ENCODE measurements at regions of chr17 and their contacts with region 1.

Region 1: DNA sequence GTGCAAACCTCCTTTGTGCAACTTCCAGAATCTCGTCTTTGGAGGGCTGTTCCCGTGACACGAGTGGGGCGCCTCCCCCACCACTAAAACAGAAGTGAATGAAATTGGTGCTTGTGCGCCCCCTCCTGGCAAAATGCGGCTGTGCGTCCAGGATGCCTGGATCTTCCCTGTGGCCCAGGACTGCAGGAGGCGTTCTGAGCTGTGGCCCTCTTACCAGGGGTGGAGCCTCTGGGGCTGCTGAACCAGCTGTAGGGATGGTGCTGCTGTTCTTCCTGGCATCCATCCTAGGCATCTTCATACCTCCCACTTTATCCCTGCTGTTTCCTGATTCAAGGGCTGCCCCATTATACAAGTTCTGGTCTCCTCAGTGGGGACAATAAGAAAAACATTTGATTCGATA is 18.5 kb upstream of the NAGLU start:
- DNase-seq: peak; percentile 60 to 78
- H3K4me3 ChIP-seq: no peak overlapping the region
- H3K27ac ChIP-seq: peak overlapping the region; percentile 89
- H3K4me1 ChIP-seq: peaks cover 53% of the 10 kb centered on the region
- H3K27me3 ChIP-seq: no peaks in the 10 kb centered on the region
- CTCF ChIP-seq: peak; percentile 95

Region 2: DNA sequence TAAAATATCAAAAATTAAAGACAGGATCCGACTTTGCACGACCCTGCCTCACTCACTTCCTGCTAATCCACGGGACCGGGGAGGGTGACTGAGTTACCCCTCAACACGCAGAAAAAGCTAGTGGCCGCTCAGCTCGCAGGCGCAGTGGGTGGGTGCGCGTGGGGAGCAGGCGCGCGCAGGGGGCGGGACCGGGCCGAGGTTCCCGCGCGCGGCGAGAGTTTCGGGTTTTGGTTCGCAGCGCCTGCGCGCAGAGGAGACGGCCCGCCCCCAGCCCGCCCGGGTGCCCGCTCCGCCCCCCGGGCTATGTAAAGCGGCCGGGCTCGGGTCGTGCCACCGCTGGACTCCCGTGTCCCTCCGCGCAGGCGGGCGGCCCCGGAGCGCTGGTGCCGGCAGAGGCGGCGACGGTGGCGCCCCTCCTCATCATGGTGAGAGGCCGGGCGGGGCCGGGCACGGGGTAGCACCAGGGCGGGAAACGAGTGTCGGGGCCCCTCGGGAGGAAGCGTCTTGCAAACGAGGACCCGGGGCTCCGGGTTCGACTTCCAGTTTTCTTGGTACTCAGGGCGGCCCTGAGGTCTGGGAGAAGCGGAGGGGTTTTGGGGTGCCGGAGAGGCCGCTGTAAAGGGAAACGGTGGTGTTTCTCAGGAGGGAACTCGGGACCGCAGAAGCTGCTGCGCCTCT is 550.9 kb before region 1 on chr17 and contains the start of gene CNP:
- CTCF ChIA-PET with region 1: no interaction called
- POLR2A ChIA-PET with region 1: no interaction called
- intact Hi-C with region 1: loop called (anchors 5 kb)
- DNase-seq: peak; percentile 69 to 90
- H3K4me3 ChIP-seq: peak within 1 kb of the TSS; percentile 78
- H3K27ac ChIP-seq: peak within 1 kb of the TSS; percentile 93
- H3K4me1 ChIP-seq: peaks cover 11% of the 10 kb centered on the region
- H3K27me3 ChIP-seq: no peaks in the 10 kb centered on the region
- CTCF ChIP-seq: no peak
- total RNA-seq, gene CNP: 60.6 and 64.7 TPM in 2 replicates

Region 3: GRCh38 chr17:42405963-42406495 is 111.5 kb before region 1 on chr17:
- CTCF ChIA-PET with region 1: interaction called, 7 read pairs
- POLR2A ChIA-PET with region 1: interaction called, 8 read pairs
- intact Hi-C with region 1: loop called (anchors 5 kb)
- DNase-seq: peak in 1 of 2 experiments; percentile 45
- H3K4me3 ChIP-seq: no peak overlapping the region
- H3K27ac ChIP-seq: no peak overlapping the region
- H3K4me1 ChIP-seq: peaks cover 55% of the 10 kb centered on the region
- H3K27me3 ChIP-seq: no peaks in the 10 kb centered on the region
- CTCF ChIP-seq: peak; percentile 75

Region 4: DNA sequence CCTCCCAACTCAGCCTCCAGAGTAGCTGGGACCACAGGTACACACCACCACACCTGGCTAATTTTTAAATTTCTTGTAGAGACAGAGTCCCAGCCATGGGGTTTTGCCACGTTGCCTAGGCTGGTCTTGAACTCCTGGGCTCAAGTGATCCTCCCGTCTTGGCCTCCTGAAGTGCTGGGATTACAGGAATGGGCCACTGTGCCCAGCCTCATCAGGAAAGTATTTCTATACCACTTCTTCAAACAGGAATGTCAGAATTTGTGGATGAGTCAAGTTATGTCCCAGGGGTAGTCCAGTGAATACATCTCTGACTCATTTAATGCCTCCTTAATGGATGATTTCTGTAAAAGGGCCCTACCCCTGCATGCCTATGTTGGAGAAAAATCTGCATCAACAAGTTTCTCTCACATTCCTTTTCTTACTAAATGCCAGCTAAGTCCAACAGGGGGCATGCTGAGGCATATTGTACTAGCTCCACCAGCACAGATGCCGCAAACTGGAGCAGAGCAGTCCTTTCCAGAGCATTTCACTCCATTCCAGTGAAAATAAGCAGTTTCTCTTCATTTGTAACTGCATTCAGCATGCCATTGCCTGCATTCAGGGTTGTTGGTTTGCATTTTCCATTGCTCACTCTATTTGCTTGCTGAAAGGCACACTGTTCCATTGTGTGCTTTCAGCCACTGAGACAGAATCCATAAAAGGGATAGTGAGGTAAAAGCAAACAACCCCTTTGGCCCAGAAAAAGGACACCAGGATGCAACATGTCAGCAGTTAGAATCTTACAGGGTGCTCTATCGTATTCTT is 89.2 kb before region 1 on chr17:
- CTCF ChIA-PET with region 1: interaction called, 5 read pairs
- POLR2A ChIA-PET with region 1: interaction called, 11 read pairs
- intact Hi-C with region 1: loop called (anchors 1 kb)
- DNase-seq: peak; percentile 67 to 98
- H3K4me3 ChIP-seq: no peak overlapping the region
- H3K27ac ChIP-seq: peak overlapping the region; percentile 73
- H3K4me1 ChIP-seq: peaks cover 34% of the 10 kb centered on the region
- H3K27me3 ChIP-seq: no peaks in the 10 kb centered on the region
- CTCF ChIP-seq: peak; percentile 86

Region 5: GRCh38 chr17:42536048-42536371 is 18.5 kb after region 1 on chr17 and contains the start of gene NAGLU:
- CTCF ChIA-PET with region 1: no interaction called
- POLR2A ChIA-PET with region 1: interaction called, 18 read pairs
- intact Hi-C with region 1: no loop called
- DNase-seq: peak; percentile 66 to 86
- H3K4me3 ChIP-seq: peak within 1 kb of the TSS; percentile 61
- H3K27ac ChIP-seq: peak within 1 kb of the TSS; percentile 36; the same call in 1 of the 2 replicates
- H3K4me1 ChIP-seq: peaks cover 23% of the 10 kb centered on the region
- H3K27me3 ChIP-seq: no peaks in the 10 kb centered on the region
- CTCF ChIP-seq: no peak
- total RNA-seq, gene NAGLU: 18.2 and 20.6 TPM in 2 replicates

Region 6: GRCh38 chr17:42591411-42591810 is 73.9 kb after region 1 on chr17:
- CTCF ChIA-PET with region 1: no interaction called
- POLR2A ChIA-PET with region 1: no interaction called
- intact Hi-C with region 1: no loop called
- DNase-seq: no peak
- H3K4me3 ChIP-seq: no peak overlapping the region
- H3K27ac ChIP-seq: no peak overlapping the region
- H3K4me1 ChIP-seq: no peaks in the 10 kb centered on the region
- H3K27me3 ChIP-seq: no peaks in the 10 kb centered on the region
- CTCF ChIP-seq: no peak

Region 7: GRCh38 chr17:42609182-42609813 is 91.8 kb after region 1 on chr17 and contains the starts of genes RETREG3 and TUBG1:
- CTCF ChIA-PET with region 1: no interaction called
- POLR2A ChIA-PET with region 1: no interaction called
- intact Hi-C with region 1: no loop called
- DNase-seq: peak; percentile 94 to 99
- H3K4me3 ChIP-seq: peak within 1 kb of the TSS; percentile 99
- H3K27ac ChIP-seq: peak within 1 kb of the TSS; percentile 48
- H3K4me1 ChIP-seq: peaks cover 13% of the 10 kb centered on the region
- H3K27me3 ChIP-seq: no peaks in the 10 kb centered on the region
- CTCF ChIP-seq: peak; percentile 44; the same call in 1 of the 2 replicates
- total RNA-seq, gene RETREG3: 57.0 and 61.7 TPM in 2 replicates
- total RNA-seq, gene TUBG1: 79.1 and 85.6 TPM in 2 replicates